CD8-positive, alpha-beta T cell (primary cell): ENCODE measurements at regions of chr2 and their contacts with region 1.

Region 1: DNA sequence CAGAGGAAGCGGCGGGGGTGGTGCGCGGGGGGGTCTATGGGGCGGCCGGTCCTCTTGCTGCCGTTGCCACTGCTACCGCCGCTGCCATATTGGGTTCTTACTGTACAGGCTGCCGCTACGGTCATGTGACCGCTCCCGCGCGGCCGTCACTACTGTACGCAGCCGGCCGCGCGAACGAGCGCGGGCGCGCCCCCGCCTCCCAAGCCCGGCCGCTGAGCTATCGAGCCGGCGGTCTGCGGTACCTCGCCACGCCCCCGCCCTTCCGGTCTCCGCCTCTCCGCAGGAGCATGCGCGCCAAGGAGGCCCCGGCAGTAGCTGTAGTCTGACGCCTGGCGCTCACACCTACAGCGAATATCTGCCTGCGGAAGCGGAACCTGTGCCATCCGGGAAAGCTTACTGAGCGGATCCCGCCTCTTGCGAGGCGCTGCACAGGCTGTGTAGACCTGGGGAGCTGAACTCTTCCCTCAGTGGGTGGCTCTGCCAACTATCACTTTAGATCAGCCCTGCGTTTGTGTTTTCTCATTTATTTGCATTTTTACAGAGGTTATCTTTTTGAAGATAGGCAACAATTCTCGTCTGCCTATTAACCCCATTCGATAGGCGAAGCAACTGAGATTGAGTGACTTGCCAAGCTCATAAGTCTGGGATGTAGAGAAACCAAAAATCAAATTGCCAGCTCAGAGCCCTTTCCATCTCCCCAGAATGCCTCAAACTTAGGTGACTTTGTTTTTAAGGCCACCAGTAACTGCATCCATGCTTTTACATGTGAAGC is at the start of gene ASXL2:
- DNase-seq: peak; percentile 93 to 100 (median 97)
- ATAC-seq: peak; percentile 85
- H3K4me3 ChIP-seq: peak within 1 kb of the TSS; percentile 74 to 93
- H3K4me3 Mint-ChIP-seq: peak within 1 kb of the TSS; percentile 92
- H3K27ac ChIP-seq: peak within 1 kb of the TSS; percentile 95 to 96
- H3K27ac Mint-ChIP-seq: peak within 1 kb of the TSS; percentile 99
- H3K4me1 ChIP-seq: peaks cover 25% of the 10 kb centered on the region
- H3K4me1 Mint-ChIP-seq: peaks cover 34% of the 10 kb centered on the region
- H3K27me3 ChIP-seq: no peaks in the 10 kb centered on the region
- H3K27me3 Mint-ChIP-seq: no peaks in the 10 kb centered on the region
- CTCF ChIP-seq: no peak
- total RNA-seq, gene ASXL2: 7.5 to 10.7 TPM

Region 2: GRCh38 chr2:24792874-24793760 is 1085.4 kb before region 1 on chr2 and contains the starts of genes CENPO and PTRHD1:
- CTCF ChIA-PET with region 1: no interaction called
- POLR2A ChIA-PET with region 1: no interaction called
- intact Hi-C with region 1: loop called in 1 of 2 experiments (anchors 5 kb)
- DNase-seq: peak; percentile 89 to 97 (median 94)
- ATAC-seq: peak; percentile 96
- H3K4me3 ChIP-seq: peak within 1 kb of the TSS; percentile 92 to 97
- H3K4me3 Mint-ChIP-seq: peak within 1 kb of the TSS; percentile 98
- H3K27ac ChIP-seq: peak within 1 kb of the TSS; percentile 90 to 98
- H3K27ac Mint-ChIP-seq: peak within 1 kb of the TSS; percentile 99
- H3K4me1 ChIP-seq: peaks cover 12% of the 10 kb centered on the region
- H3K4me1 Mint-ChIP-seq: peaks cover 18% of the 10 kb centered on the region
- H3K27me3 ChIP-seq: no peaks in the 10 kb centered on the region
- H3K27me3 Mint-ChIP-seq: no peaks in the 10 kb centered on the region
- CTCF ChIP-seq: peak; percentile 68
- total RNA-seq, gene CENPO: 3.4 to 3.6 TPM
- total RNA-seq, gene PTRHD1: 12.2 to 19.0 TPM

Region 3: GRCh38 chr2:25673300-25674076 is 205.1 kb before region 1 on chr2 and contains the start of gene DTNB:
- CTCF ChIA-PET with region 1: interaction called, 6 read pairs
- POLR2A ChIA-PET with region 1: interaction called, 10 read pairs
- intact Hi-C with region 1: loop called in 1 of 2 experiments (anchors 1 kb)
- DNase-seq: peak; percentile 52 to 91 (median 77)
- ATAC-seq: peak; percentile 73
- H3K4me3 ChIP-seq: peak within 1 kb of the TSS; percentile 75 to 76
- H3K4me3 Mint-ChIP-seq: peak within 1 kb of the TSS; percentile 88
- H3K27ac ChIP-seq: peak within 1 kb of the TSS; percentile 62 to 70
- H3K27ac Mint-ChIP-seq: peak within 1 kb of the TSS; percentile 83
- H3K4me1 ChIP-seq: peaks cover 15% of the 10 kb centered on the region
- H3K4me1 Mint-ChIP-seq: peaks cover 33% of the 10 kb centered on the region
- H3K27me3 ChIP-seq: no peaks in the 10 kb centered on the region
- H3K27me3 Mint-ChIP-seq: no peaks in the 10 kb centered on the region
- CTCF ChIP-seq: no peak
- total RNA-seq, gene DTNB: 27.1 to 33.2 TPM

Region 4: DNA sequence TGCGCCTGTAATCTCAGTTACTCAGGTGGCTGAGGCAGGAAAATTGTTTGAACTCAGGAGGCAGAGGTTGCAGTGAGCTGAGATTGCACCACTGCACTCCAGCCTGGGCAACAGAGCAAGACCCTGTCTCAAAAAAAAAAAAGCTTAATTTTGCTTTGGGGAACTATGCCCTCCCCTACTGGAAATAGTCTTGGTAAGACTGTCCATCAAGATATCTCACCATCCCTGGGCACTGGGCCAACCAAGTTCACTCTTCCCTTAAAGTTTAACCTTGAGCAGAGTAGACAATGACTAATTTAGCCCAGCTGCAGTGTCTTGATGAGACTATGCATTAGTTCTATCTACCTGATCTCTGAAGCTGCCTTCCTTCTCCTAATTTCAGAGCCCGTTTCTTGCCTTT is 45.0 kb before region 1 on chr2:
- CTCF ChIA-PET with region 1: no interaction called
- POLR2A ChIA-PET with region 1: no interaction called
- intact Hi-C with region 1: no loop called
- DNase-seq: no peak
- ATAC-seq: no peak
- H3K4me3 ChIP-seq: no peak overlapping the region
- H3K4me3 Mint-ChIP-seq: no peak overlapping the region
- H3K27ac ChIP-seq: no peak overlapping the region
- H3K27ac Mint-ChIP-seq: no peak overlapping the region
- H3K4me1 ChIP-seq: peaks cover 15% of the 10 kb centered on the region
- H3K4me1 Mint-ChIP-seq: peaks cover 52% of the 10 kb centered on the region
- H3K27me3 ChIP-seq: no peaks in the 10 kb centered on the region
- H3K27me3 Mint-ChIP-seq: no peaks in the 10 kb centered on the region
- CTCF ChIP-seq: no peak

Region 5: DNA sequence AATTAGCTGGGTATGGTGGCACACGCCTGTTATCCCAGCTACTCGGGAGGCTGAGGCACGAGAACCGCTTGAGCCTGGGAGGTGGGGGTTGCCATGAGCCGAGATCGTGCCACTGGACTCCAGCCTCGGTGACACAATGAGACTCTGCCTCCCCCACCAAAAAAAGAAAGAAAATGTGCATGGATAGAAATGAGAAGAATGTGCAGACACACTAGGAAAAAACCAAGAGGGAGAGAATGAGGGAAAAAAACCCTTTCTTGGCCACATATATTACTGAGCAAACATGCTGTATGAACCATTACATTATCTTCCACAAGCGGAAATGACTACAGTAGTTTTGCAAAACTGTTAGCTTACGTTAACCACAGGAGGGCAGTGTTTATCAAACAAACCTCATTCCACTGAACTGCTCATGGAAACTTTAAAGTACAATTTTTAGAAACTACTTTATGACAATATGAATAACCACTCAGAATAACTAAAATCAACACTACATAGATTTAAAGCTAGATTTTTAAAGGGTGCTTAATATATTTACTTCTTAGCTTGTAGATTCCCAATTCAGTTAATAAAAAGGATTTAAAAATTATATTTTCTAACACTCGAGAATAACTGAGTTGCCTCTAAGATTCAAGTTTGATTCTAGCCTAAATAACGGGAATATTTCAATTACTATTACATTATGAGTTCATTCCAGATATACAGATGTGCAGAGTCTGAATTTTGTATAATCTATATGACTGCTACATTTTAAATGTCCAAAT is 26.6 kb before region 1 on chr2:
- CTCF ChIA-PET with region 1: interaction called, 14 read pairs
- POLR2A ChIA-PET with region 1: interaction called, 24 read pairs
- intact Hi-C with region 1: loop called (anchors 1 kb)
- DNase-seq: peak in 5 of 9 experiments; percentile 10 to 86 (median 26)
- ATAC-seq: peak; percentile 95
- H3K4me3 ChIP-seq: peak overlapping the region in 1 of 2 experiments; percentile 6
- H3K4me3 Mint-ChIP-seq: peak overlapping the region; percentile 65
- H3K27ac ChIP-seq: peak overlapping the region in 1 of 2 experiments; percentile 30
- H3K27ac Mint-ChIP-seq: no peak overlapping the region
- H3K4me1 ChIP-seq: peaks cover 32% of the 10 kb centered on the region
- H3K4me1 Mint-ChIP-seq: peaks cover 50% of the 10 kb centered on the region
- H3K27me3 ChIP-seq: no peaks in the 10 kb centered on the region
- H3K27me3 Mint-ChIP-seq: no peaks in the 10 kb centered on the region
- CTCF ChIP-seq: peak; percentile 74

Region 6: DNA sequence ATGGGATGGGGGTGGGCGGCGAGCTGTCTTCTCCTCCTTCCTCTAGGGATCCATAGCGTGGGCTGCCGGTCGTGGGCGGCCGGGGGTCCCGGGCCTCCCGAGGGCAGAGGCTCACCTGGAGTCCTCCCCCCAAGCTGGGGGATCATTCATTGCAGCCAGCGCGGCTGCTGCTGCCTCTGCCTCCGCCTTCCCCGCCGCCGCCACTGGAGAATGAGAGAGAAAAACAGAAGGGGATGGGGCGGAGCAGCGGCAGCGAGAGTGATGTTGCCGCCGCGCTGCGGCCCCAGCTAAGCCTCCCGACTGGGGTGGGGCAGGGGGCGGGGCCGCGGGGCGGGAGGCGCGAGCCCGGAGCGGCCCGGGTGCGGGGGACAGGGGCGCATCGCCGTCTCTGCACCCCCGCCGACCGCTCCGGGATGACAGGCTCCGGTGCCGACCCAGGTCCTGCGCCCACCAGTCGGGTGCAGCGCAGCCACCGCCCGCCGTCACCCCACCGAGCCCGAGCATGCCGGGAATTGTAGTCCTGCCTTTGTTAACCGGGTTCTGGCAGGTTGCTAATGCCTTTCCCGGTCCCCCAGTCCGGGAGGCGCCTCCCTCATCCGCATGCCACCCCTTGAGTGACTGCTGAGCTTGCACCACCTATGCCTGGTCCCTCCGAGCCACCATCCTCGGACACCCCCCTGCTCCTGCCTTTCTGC is 103.9 kb after region 1 on chr2 and contains the start of gene KIF3C:
- CTCF ChIA-PET with region 1: no interaction called
- POLR2A ChIA-PET with region 1: interaction called, 3 read pairs
- intact Hi-C with region 1: loop called (anchors 1 kb)
- DNase-seq: peak; percentile 46 to 84 (median 76)
- ATAC-seq: peak; percentile 92
- H3K4me3 ChIP-seq: peak within 1 kb of the TSS; percentile 61 to 81
- H3K4me3 Mint-ChIP-seq: peak within 1 kb of the TSS; percentile 88
- H3K27ac ChIP-seq: peak within 1 kb of the TSS; percentile 26 to 28
- H3K27ac Mint-ChIP-seq: peak within 1 kb of the TSS; percentile 79
- H3K4me1 ChIP-seq: peaks cover 11% of the 10 kb centered on the region
- H3K4me1 Mint-ChIP-seq: peaks cover 17% of the 10 kb centered on the region
- H3K27me3 ChIP-seq: no peaks in the 10 kb centered on the region
- H3K27me3 Mint-ChIP-seq: no peaks in the 10 kb centered on the region
- CTCF ChIP-seq: no peak
- total RNA-seq, gene KIF3C: 1.5 to 2.3 TPM

Region 7: DNA sequence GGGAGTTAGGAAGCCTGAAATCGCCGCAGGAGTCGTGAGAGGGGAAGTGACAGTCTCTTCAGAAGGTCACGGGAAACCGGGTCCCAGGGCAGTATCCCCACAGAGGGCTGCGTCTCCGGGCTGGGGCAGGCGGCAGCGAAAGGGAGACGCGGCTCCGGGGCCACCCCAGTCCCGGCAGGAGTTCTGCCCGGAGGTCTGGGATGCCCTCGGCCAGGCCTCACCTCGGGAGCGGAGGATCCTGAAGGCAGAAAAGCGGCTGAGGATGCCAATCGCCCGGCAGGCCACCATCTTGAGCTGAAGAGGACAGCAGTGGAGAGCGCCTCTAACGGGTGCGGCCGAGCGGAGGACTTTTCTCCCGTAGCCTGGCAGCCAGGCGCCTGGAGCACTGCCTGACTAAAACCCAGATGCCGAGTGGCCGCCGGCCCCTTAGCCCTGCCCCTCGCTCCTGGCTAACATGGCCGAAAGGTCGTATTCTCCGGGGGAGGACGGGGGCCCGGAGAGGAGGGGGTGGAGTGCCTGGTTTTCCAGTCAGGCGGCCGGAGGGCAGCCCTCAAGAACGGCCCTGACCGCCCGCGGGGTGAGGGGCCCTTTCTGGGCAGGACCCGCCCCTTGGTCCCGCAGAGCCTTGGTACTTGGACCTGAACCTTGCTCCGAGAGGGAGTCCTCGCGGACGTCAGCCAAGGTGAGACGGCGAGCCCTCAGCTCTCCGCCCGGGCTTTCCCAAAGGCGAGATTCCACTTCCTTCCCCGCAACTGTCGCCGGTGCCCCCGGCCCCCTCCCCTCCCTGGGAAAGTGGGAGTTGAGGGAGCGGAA is 366.0 kb after region 1 on chr2 and contains the starts of genes HADHA and HADHB:
- CTCF ChIA-PET with region 1: no interaction called
- POLR2A ChIA-PET with region 1: interaction called, 3 read pairs
- intact Hi-C with region 1: loop called (anchors 5 kb)
- DNase-seq: peak; percentile 72 to 91 (median 84)
- ATAC-seq: peak; percentile 82
- H3K4me3 ChIP-seq: peak within 1 kb of the TSS; percentile 99
- H3K4me3 Mint-ChIP-seq: peak within 1 kb of the TSS; percentile 99
- H3K27ac ChIP-seq: peak within 1 kb of the TSS; percentile 99
- H3K27ac Mint-ChIP-seq: peak within 1 kb of the TSS; percentile 100
- H3K4me1 ChIP-seq: peaks cover 22% of the 10 kb centered on the region
- H3K4me1 Mint-ChIP-seq: peaks cover 60% of the 10 kb centered on the region
- H3K27me3 ChIP-seq: no peaks in the 10 kb centered on the region
- H3K27me3 Mint-ChIP-seq: no peaks in the 10 kb centered on the region
- CTCF ChIP-seq: no peak
- total RNA-seq, gene HADHA: 66.8 to 69.4 TPM
- total RNA-seq, gene HADHB: 26.0 to 26.1 TPM